MCF 10A (cell line): ENCODE measurements at regions of chr6 and their contacts with region 1.

Region 1: GRCh38 chr6:31862344-31863227 is at the start of gene NEU1:
- DNase-seq: peak; percentile 100
- H3K4me3 Mint-ChIP-seq: peak within 1 kb of the TSS; percentile 89
- H3K27ac Mint-ChIP-seq: peak within 1 kb of the TSS; percentile 66
- H3K4me1 Mint-ChIP-seq: peaks cover 10% of the 10 kb centered on the region
- H3K27me3 Mint-ChIP-seq: no peaks in the 10 kb centered on the region
- CTCF ChIP-seq: no peak
- total RNA-seq, gene NEU1: 19.7 and 43.8 TPM in 2 replicates

Region 2: DNA sequence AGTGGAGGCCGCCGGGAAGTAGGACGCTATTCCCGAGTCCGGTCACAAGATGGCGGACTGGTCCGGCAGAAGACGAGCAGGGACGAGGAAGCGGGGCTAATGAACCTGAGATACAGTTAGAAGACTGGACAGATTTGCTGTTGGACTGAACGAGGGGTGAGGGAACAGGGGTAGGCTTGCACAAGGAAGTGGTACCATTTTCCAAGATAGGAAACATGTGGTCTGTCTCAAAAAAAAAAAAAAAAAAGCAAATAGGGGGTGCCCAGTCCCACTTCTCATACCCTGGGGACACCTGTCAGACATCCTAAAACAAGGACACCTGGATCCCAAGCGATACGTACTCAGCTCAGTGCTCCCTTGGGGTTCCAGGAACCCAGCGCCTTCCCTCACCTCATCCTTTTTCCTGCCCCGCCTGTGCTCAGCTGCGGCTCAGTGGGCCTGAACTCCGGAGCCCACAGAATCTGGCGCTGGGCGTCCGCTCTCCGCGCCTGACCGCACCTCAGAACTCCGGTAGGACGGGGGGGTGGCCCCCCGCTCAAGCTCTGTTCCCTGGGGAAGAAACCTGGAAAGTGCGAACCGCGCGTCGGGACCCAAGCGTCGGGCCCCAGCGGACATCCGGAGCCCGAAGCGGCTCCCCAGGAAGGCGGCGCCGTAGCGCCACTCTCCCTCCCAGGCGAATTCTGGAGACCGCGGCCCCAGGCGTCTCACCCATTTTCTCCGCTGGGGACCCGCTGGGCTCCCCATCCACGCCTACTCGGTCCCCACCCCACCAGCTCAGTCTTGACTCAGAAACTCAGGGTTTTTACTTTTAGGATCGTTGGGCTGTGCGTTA is 181.5 kb before region 1 on chr6 and contains the start of gene LY6G5C:
- CTCF ChIA-PET with region 1: interaction called, 4 read pairs
- POLR2A ChIA-PET with region 1: interaction called, 4 read pairs
- intact Hi-C with region 1: loop called (anchors 1 kb)
- DNase-seq: peak; percentile 81
- H3K4me3 Mint-ChIP-seq: peak within 1 kb of the TSS; percentile 73
- H3K27ac Mint-ChIP-seq: peak within 1 kb of the TSS; percentile 87
- H3K4me1 Mint-ChIP-seq: peaks cover 12% of the 10 kb centered on the region
- H3K27me3 Mint-ChIP-seq: peaks cover 18% of the 10 kb centered on the region
- CTCF ChIP-seq: peak; percentile 84
- total RNA-seq, gene LY6G5C: 0.64 and 1.4 TPM in 2 replicates

Region 3: GRCh38 chr6:31763619-31763940 is 99.0 kb before region 1 on chr6:
- CTCF ChIA-PET with region 1: no interaction called
- POLR2A ChIA-PET with region 1: no interaction called
- intact Hi-C with region 1: no loop called
- DNase-seq: peak; percentile 26
- H3K4me3 Mint-ChIP-seq: no peak overlapping the region
- H3K27ac Mint-ChIP-seq: no peak overlapping the region
- H3K4me1 Mint-ChIP-seq: no peaks in the 10 kb centered on the region
- H3K27me3 Mint-ChIP-seq: no peaks in the 10 kb centered on the region
- CTCF ChIP-seq: no peak

Region 4: GRCh38 chr6:31776989-31777666 is 85.5 kb before region 1 on chr6 and contains the start of gene VWA7:
- CTCF ChIA-PET with region 1: no interaction called
- POLR2A ChIA-PET with region 1: interaction called, 6 read pairs
- intact Hi-C with region 1: loop called (anchors 1 kb)
- DNase-seq: peak; percentile 95
- H3K4me3 Mint-ChIP-seq: peak within 1 kb of the TSS; percentile 26
- H3K27ac Mint-ChIP-seq: no peak within 1 kb of the TSS
- H3K4me1 Mint-ChIP-seq: peaks cover 26% of the 10 kb centered on the region
- H3K27me3 Mint-ChIP-seq: no peaks in the 10 kb centered on the region
- CTCF ChIP-seq: no peak
- total RNA-seq, gene VWA7: 2.0 and 3.1 TPM in 2 replicates

Region 5: GRCh38 chr6:31815025-31815838 is 47.4 kb before region 1 on chr6 and contains the starts of genes HSPA1A and HSPA1L:
- CTCF ChIA-PET with region 1: no interaction called
- POLR2A ChIA-PET with region 1: interaction called, 12 read pairs
- intact Hi-C with region 1: loop called (anchors 2 kb)
- DNase-seq: peak; percentile 99
- H3K4me3 Mint-ChIP-seq: peak within 1 kb of the TSS; percentile 89
- H3K27ac Mint-ChIP-seq: peak within 1 kb of the TSS; percentile 97
- H3K4me1 Mint-ChIP-seq: peaks cover 11% of the 10 kb centered on the region
- H3K27me3 Mint-ChIP-seq: no peaks in the 10 kb centered on the region
- CTCF ChIP-seq: no peak
- total RNA-seq, gene HSPA1A: 20.3 and 34.0 TPM in 2 replicates
- total RNA-seq, gene HSPA1L: 0.35 and 0.79 TPM in 2 replicates

Region 6: DNA sequence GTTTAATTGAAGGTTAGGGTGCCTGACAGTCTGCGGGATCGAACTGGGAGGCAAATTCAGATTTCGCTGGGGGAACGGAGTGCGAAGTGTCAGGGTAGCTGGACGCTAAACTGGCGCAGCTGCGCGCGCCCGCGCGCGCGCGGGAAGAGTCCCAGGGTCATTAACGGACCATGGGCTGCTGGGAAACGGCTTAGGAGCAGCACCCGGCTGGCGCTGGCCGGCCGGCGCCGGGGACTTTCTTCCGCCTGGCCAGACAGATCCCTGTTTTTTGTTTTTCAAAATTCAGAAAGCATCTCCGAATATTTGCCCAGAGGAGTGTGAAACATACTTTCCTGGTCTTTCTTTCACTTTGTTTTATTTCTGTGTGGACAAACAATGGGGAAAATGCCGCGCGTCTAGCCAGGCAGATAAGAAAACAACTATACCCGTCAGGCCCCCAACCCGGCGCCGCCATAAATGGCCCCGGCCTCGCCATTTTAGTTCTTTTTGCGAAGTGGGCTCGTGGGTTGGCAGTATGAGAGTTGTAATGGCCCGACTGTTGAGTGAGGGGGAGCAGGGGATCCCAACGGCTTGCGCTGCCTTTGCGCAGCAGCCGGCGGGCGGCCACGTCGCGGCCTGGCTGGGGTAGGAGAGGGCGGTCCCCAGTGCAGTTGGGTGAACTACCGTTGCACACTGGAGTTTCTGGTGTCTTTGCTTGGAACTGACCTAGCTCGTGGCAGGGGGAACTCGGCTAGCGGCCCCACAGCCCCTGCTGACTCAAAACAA is 28.0 kb before region 1 on chr6:
- CTCF ChIA-PET with region 1: interaction called, 5 read pairs
- POLR2A ChIA-PET with region 1: interaction called, 32 read pairs
- intact Hi-C with region 1: loop called (anchors 1 kb)
- DNase-seq: peak; percentile 87
- H3K4me3 Mint-ChIP-seq: peak overlapping the region; percentile 86
- H3K27ac Mint-ChIP-seq: peak overlapping the region; percentile 99
- H3K4me1 Mint-ChIP-seq: peaks cover 18% of the 10 kb centered on the region
- H3K27me3 Mint-ChIP-seq: no peaks in the 10 kb centered on the region
- CTCF ChIP-seq: no peak

Region 7: GRCh38 chr6:31901953-31902643 is 39.5 kb after region 1 on chr6 and contains the start of gene ZBTB12:
- CTCF ChIA-PET with region 1: interaction called, 3 read pairs
- POLR2A ChIA-PET with region 1: interaction called, 16 read pairs
- intact Hi-C with region 1: no loop called
- DNase-seq: peak; percentile 93
- H3K4me3 Mint-ChIP-seq: peak within 1 kb of the TSS; percentile 67
- H3K27ac Mint-ChIP-seq: peak within 1 kb of the TSS; percentile 33
- H3K4me1 Mint-ChIP-seq: peaks cover 24% of the 10 kb centered on the region
- H3K27me3 Mint-ChIP-seq: no peaks in the 10 kb centered on the region
- CTCF ChIP-seq: no peak
- total RNA-seq, gene ZBTB12: 3.6 and 4.0 TPM in 2 replicates

Region 8: GRCh38 chr6:32271429-32271828 is 408.8 kb after region 1 on chr6:
- CTCF ChIA-PET with region 1: no interaction called
- POLR2A ChIA-PET with region 1: no interaction called
- intact Hi-C with region 1: no loop called
- DNase-seq: no peak
- H3K4me3 Mint-ChIP-seq: no peak overlapping the region
- H3K27ac Mint-ChIP-seq: no peak overlapping the region
- H3K4me1 Mint-ChIP-seq: no peaks in the 10 kb centered on the region
- H3K27me3 Mint-ChIP-seq: peaks cover 44% of the 10 kb centered on the region
- CTCF ChIP-seq: no peak